Mammary epithelial cell (primary cell): ENCODE measurements at regions of chr1 and their contacts with region 1.

Region 1: GRCh38 chr1:44895919-44896734 is 53.1 kb upstream of the PTCH2 start:
- DNase-seq: no peak
- H3K4me3 ChIP-seq: no peak overlapping the region
- H3K27ac ChIP-seq: no peak overlapping the region
- H3K4me1 ChIP-seq: peaks cover 4% of the 10 kb centered on the region
- H3K27me3 ChIP-seq: no peaks in the 10 kb centered on the region
- CTCF ChIP-seq: no peak

Region 2: DNA sequence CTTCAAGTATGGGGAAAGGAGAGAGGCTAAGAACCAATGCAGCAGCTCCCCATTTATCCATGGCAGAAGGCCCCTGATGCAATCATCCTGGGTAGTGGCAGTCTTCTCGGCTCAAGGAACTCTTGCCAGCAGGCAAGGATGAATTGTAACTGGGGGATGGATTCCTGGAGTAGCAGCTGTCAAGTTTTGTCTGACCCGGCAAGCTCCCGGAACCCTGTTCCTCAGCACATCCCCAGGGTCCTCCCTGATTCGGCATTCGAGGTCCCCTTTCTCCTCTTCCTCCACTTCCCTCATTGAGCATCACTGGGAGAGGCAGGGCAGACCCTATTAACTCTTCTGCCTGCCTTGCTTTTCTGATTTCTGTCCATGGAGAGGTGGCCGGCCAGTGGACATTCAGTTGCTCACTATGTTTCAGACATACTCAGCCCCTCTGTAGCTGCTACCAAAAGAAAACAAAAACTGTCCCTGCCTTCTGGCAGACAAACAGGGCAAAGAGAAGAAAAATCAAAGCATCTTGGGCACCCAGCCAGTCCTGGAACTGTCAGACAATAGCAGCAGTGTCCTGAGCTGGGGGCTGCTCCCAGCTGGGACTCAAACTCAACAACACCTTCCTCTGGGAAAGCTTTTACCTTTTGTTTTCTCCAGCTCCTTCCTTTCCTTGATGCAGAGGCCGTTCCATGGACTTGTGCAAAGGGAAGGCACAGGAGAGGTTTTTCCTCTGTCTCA is 47.5 kb before region 1 on chr1:
- CTCF ChIA-PET with region 1: no interaction called
- dilution Hi-C with region 1: loop called (anchors 5 kb)
- in situ Hi-C with region 1: no loop called
- intact Hi-C with region 1: no loop called
- DNase-seq: no peak
- H3K4me3 ChIP-seq: no peak overlapping the region
- H3K27ac ChIP-seq: no peak overlapping the region
- H3K4me1 ChIP-seq: peaks cover 5% of the 10 kb centered on the region
- H3K27me3 ChIP-seq: no peaks in the 10 kb centered on the region
- CTCF ChIP-seq: no peak

Region 3: GRCh38 chr1:44945967-44946366 is 49.8 kb after region 1 on chr1:
- CTCF ChIA-PET with region 1: no interaction called
- dilution Hi-C with region 1: no loop called
- in situ Hi-C with region 1: no loop called
- intact Hi-C with region 1: no loop called
- DNase-seq: no peak
- H3K4me3 ChIP-seq: no peak overlapping the region
- H3K27ac ChIP-seq: no peak overlapping the region
- H3K4me1 ChIP-seq: peaks cover 11% of the 10 kb centered on the region
- H3K27me3 ChIP-seq: no peaks in the 10 kb centered on the region
- CTCF ChIP-seq: no peak

Region 4: DNA sequence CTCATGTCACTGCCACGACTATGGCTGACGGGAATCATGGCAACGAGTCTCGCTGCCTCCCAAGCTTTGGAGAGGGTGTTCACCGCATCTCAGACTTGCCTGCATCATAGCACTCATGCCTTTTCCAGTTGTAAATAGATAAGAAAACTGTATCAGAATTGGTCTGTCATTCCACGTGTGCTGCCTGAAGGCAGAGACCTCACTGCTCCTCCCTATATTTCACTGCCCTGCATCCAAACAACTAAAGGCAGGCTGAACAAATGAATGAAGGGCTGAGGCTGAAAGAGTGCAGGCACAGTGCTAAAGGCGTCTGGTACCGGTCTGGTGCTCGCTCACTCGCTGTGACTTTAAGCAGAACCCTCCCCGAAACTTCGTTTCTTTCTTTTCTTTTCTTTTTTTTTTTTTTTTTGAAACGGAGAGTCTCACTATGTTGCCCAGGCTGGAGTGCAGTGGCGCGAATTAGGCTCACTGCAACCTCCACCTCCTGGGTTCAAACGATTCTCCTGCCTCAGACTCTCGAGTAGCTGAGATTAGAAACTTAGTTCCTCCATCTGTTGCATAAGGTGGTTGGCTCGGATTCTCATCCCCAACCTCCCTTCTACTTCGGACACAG is 89.7 kb after region 1 on chr1:
- CTCF ChIA-PET with region 1: no interaction called
- dilution Hi-C with region 1: no loop called
- in situ Hi-C with region 1: no loop called
- intact Hi-C with region 1: no loop called
- DNase-seq: peak; percentile 10
- H3K4me3 ChIP-seq: peak overlapping the region; percentile 76 to 94 (median 91)
- H3K27ac ChIP-seq: peak overlapping the region; percentile 46
- H3K4me1 ChIP-seq: peaks cover 10% of the 10 kb centered on the region
- H3K27me3 ChIP-seq: no peaks in the 10 kb centered on the region
- CTCF ChIP-seq: no peak